OCI-LY7 (cell line): ENCODE measurements at regions of chr2 and their contacts with region 1.

Region 1: GRCh38 chr2:143259368-143259958 is 130.2 kb downstream of the ARHGAP15 start:
- DNase-seq: peak; percentile 77
- H3K4me3 ChIP-seq: no peak overlapping the region
- H3K27ac ChIP-seq: no peak overlapping the region
- H3K4me1 ChIP-seq: peaks cover 30% of the 10 kb centered on the region
- CTCF ChIP-seq: peak; percentile 97

Region 2: GRCh38 chr2:143034292-143035074 is 225.0 kb before region 1 on chr2:
- CTCF ChIA-PET with region 1: no interaction called
- POLR2A ChIA-PET with region 1: interaction called, 4 read pairs
- intact Hi-C with region 1: loop called (anchors 1 kb)
- DNase-seq: peak; percentile 86
- H3K4me3 ChIP-seq: no peak overlapping the region
- H3K27ac ChIP-seq: no peak overlapping the region
- H3K4me1 ChIP-seq: no peaks in the 10 kb centered on the region
- CTCF ChIP-seq: peak; percentile 100

Region 3: DNA sequence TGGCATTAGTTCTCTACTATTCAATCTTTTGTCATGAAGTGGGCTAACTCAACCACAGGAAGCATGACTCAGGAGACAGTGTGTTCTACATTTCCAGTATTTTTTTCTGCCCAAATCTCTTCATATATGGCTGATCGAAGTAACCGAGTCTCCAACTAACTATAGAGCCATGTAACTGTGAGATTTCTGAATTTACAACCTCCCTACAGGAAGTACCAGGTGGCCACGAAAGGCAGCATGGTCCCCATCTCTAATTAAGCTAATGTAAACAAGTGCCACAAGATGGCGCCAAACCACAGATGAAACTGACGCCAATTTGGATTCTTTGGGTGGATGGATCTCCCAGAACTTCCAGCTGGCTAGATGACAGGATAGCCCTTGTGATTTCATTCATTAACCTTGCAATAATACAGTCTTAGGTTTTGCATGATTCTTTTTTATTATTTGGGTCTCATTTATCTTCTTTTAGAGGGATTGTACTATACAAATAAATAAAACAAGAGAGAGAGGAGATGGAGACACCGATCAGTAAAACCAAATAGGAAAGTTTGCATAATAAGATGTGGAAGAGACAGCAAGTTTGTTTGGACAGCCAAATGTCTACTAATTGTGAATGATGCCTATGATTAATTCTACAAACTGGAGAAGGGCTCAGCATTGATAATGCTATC is 148.6 kb before region 1 on chr2:
- CTCF ChIA-PET with region 1: interaction called, 7 read pairs
- POLR2A ChIA-PET with region 1: interaction called, 5 read pairs
- intact Hi-C with region 1: loop called (anchors 1 kb)
- DNase-seq: peak; percentile 90
- H3K4me3 ChIP-seq: no peak overlapping the region
- H3K27ac ChIP-seq: no peak overlapping the region
- H3K4me1 ChIP-seq: peaks cover 7% of the 10 kb centered on the region
- CTCF ChIP-seq: peak; percentile 99

Region 4: DNA sequence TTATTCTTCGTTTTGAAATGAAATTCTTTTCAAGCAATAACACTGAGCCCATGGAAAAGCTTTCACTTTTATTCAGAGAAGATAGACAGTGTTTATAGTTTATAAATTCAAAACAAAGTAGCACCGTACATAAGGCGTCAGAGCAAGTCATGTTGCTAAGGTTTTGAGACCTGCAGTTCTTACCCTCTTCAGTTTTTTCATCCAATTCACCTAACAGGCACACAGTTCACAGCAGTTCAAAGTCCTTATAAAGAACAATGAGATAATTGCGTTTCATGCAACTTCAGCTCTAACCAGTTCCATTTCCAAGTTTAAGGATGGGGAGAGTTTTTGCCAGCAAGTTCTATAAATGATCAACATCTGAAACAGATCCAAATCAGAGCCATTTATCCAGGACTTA is 33.5 kb before region 1 on chr2:
- CTCF ChIA-PET with region 1: interaction called, 3 read pairs
- POLR2A ChIA-PET with region 1: no interaction called
- intact Hi-C with region 1: loop called (anchors 5 kb)
- DNase-seq: no peak
- H3K4me3 ChIP-seq: no peak overlapping the region
- H3K27ac ChIP-seq: no peak overlapping the region
- H3K4me1 ChIP-seq: no peaks in the 10 kb centered on the region
- CTCF ChIP-seq: no peak